Body of pancreas (tissue), 4 donors: ENCODE measurements at regions of chr10 and their contacts with region 1.

Region 1: GRCh38 chr10:114550756-114551635 is 107.1 kb downstream of the ABLIM1 start:
- DNase-seq: peak; percentile 66 to 85 (median 78)
- ATAC-seq: peak; percentile 43
- H3K4me3 ChIP-seq: no peak overlapping the region
- H3K27ac ChIP-seq: peak overlapping the region in 3 of 4 donors; percentile 33 to 49 (median 48)
- H3K4me1 ChIP-seq: peaks cover 24% of the 10 kb centered on the region
- H3K27me3 ChIP-seq: no peaks in the 10 kb centered on the region
- CTCF ChIP-seq: peak in 6 of 7 experiments; percentile 34 to 62 (median 59)
- POLR2A ChIP-seq: no peak

Region 2: DNA sequence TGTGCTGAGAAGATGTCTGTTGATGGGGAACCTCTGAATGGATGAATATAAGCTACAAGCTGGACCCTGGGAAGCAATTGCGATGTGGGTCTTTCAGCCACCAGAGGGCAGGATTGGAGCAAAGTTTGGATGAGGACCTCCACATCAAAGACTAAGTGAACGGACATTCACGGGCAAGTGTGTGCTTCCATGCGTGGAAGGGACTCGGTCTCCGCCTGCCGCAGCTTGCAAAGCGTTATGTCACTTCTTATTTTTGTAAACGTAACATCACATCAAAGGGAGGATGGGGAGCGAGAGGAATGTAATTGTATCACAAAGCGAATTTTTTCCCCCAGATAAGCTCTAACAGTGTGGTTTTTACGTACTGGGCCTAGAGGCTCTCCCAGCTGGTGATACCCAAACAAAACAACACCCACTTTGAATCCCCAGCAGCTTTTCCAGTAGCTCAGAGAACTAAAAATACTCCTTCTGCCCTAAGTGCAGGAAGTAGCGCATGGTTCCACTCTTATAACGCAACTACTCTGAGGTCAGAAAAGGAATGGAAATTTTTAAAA is 246.9 kb before region 1 on chr10:
- intact Hi-C with region 1: loop called (anchors 10 kb)
- DNase-seq: peak; percentile 79 to 88 (median 85)
- ATAC-seq: peak; percentile 87
- H3K4me3 ChIP-seq: no peak overlapping the region
- H3K27ac ChIP-seq: peak overlapping the region in 2 of 4 donors; percentile 15 to 28
- H3K4me1 ChIP-seq: peaks cover 10% of the 10 kb centered on the region
- H3K27me3 ChIP-seq: no peaks in the 10 kb centered on the region
- CTCF ChIP-seq: peak; percentile 32 to 83 (median 78)
- POLR2A ChIP-seq: no peak

Region 3: GRCh38 chr10:114479836-114480235 is 71.2 kb before region 1 on chr10:
- intact Hi-C with region 1: loop called (anchors 2 kb)
- DNase-seq: no peak
- ATAC-seq: no peak
- H3K4me3 ChIP-seq: no peak overlapping the region
- H3K27ac ChIP-seq: peak overlapping the region in 1 of 4 donors; percentile 38
- H3K4me1 ChIP-seq: peaks cover 10% of the 10 kb centered on the region
- H3K27me3 ChIP-seq: no peaks in the 10 kb centered on the region
- CTCF ChIP-seq: no peak
- POLR2A ChIP-seq: no peak

Region 4: DNA sequence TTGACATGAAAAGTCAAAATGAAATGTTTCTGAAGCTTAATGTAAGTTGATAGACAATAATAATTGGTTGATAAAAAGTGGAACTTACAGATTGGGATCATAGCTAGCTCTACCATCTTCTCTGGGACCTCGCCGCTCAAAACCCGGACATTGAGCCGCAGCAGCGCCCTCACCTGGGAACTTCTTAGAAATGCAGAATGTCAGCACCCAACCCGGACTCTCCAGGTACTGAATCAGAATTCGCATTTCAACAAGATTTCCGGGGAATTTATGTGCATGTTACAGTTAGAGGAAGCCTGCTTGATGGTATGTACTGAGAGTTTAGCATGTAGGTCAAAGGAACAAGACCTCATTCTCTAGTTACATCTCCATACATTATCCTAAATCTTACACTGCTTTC is 143.8 kb after region 1 on chr10:
- intact Hi-C with region 1: loop called (anchors 10 kb)
- DNase-seq: peak; percentile 31 to 58 (median 46)
- ATAC-seq: peak; percentile 63
- H3K4me3 ChIP-seq: no peak overlapping the region
- H3K27ac ChIP-seq: no peak overlapping the region
- H3K4me1 ChIP-seq: peaks cover 4% of the 10 kb centered on the region
- H3K27me3 ChIP-seq: no peaks in the 10 kb centered on the region
- CTCF ChIP-seq: peak; percentile 13 to 61 (median 50)
- POLR2A ChIP-seq: no peak

Region 5: GRCh38 chr10:114754445-114755320 is 203.7 kb after region 1 on chr10:
- intact Hi-C with region 1: no loop called
- DNase-seq: no peak
- ATAC-seq: no peak
- H3K4me3 ChIP-seq: no peak overlapping the region
- H3K27ac ChIP-seq: no peak overlapping the region
- H3K4me1 ChIP-seq: no peaks in the 10 kb centered on the region
- H3K27me3 ChIP-seq: no peaks in the 10 kb centered on the region
- CTCF ChIP-seq: no peak
- POLR2A ChIP-seq: no peak

Region 6: DNA sequence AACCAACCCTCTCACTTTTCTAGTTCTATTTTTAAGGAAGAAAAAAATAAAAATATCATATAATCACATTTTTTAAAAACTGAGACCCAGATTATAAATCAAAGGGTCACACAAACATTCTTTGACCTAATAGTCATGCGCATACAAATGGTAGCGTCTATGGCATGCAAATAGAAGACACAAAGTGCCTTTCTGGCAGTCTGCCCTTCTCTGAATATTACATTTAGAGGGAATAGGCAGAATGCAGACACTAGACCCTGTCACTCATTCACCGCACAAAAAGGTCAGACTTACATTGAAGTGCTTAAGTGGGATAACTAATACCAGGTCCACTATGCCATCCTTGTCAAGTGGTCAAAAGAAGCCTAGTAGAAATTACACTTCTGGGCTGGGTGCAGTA is 244.0 kb after region 1 on chr10:
- intact Hi-C with region 1: loop called (anchors 10 kb)
- DNase-seq: no peak
- ATAC-seq: no peak
- H3K4me3 ChIP-seq: no peak overlapping the region
- H3K27ac ChIP-seq: no peak overlapping the region
- H3K4me1 ChIP-seq: no peaks in the 10 kb centered on the region
- H3K27me3 ChIP-seq: no peaks in the 10 kb centered on the region
- CTCF ChIP-seq: no peak
- POLR2A ChIP-seq: no peak